ENCODE measurements at regions of chr16 and their contacts with region 1.

Region 1: DNA sequence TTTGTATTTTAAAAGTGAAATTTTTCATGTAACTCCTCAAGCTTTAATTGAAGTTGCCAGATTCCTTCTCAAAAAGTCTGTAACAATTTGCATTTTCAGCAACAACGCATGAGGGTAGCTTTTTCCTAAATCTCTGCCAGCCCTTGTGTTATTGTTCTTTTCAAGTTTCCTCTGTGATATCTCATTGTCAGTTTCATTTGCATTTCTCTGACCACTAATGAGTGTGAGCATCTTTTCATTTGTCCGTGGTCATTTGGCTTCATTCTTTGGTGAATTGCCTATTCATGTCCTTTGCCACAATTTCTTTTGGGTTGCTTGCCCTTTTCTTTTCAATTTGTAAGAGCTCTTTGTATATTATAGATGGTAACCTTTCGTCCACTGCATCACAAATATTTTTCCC is 68.0 kb upstream of the NKD1 start:
- DNase-seq: no peak
- ATAC-seq: no peak

Region 2: DNA sequence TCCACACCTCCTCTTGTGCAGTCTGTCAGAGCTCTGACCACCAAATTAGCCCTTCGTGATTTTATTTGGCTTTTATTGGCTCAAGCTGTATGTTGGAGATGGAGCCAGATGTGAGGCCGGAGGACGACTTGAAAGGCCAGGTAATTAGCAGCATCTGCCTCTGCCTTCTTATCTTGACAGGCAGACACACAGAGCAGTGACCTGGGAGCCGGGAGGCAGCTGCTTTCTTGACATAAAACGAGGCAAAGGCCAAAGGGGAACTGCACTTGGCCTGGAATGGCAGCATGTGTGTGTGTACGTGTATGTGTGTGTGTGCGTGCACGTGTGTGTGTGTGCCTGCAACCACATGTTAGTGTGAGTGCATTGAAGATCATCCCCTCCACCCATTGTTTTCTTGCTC is 54.6 kb before region 1 on chr16:
- intact Hi-C with region 1: loop called in 1 of 2 experiments (anchors 10 kb)
- DNase-seq: no peak
- ATAC-seq: no peak